ENCODE measurements at regions of chr1 and their contacts with region 1.

Region 1: DNA sequence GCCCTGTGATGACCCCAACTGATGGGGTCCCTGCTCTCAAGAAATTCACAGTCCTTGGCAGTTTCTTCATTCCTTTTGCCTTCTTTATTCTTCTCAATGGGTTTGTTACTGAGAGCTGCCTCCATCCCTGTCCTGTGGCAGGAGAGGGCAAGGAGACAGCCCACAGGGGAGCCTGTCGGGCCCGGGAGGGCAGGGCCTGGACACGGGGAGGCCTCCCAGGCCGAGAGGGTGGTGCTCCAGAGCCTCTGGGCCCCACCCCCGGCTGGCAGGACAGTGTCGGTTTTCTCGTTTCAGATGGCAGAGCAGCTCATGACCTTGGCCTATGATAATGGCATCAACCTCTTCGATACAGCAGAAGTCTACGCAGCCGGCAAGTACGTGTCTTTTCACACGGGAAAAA is 36.2 kb downstream of the KCNAB2 start:
- DNase-seq: no peak
- ATAC-seq: no peak
- H3K4me3 ChIP-seq: no peak overlapping the region
- H3K27ac ChIP-seq: no peak overlapping the region
- H3K4me1 ChIP-seq: no peaks in the 10 kb centered on the region
- H3K27me3 ChIP-seq: no peaks in the 10 kb centered on the region
- CTCF ChIP-seq: no peak

Region 2: GRCh38 chr1:6171548-6172119 is 89.7 kb after region 1 on chr1:
- CTCF ChIA-PET with region 1: no interaction called
- POLR2A ChIA-PET with region 1: interaction called, 14 read pairs
- in situ Hi-C with region 1: no loop called
- intact Hi-C with region 1: no loop called
- DNase-seq: no peak
- ATAC-seq: peak; percentile 78
- H3K4me3 ChIP-seq: no peak overlapping the region
- H3K27ac ChIP-seq: peak overlapping the region; percentile 76
- H3K4me1 ChIP-seq: peaks cover 37% of the 10 kb centered on the region
- H3K27me3 ChIP-seq: no peaks in the 10 kb centered on the region
- CTCF ChIP-seq: peak; percentile 60

Measured in Panc1 (cell line).